ENCODE measurements at regions of chr17 and their contacts with region 1.

Region 1: DNA sequence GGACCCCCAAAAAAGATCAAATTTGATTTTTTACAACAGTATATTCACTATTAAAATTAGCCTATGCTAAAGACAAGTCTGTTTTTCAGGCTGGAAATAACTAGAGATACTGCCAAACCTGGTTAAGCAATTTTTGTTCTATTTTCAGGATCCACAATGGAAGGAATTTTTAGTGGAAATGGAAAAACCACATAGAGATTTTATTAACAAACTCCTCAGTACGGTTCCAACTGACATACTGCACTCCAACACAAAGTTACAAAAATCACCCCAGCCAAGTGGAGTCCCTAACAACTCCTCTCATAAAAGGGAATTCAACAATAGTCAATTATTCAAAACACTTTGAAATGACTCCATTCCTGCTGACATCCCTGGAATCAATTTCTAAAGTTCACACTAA is 101.6 kb upstream of the TOB1 start:
- DNase-seq: no peak

Region 2: GRCh38 chr17:50904521-50905459 is 63.0 kb before region 1 on chr17:
- intact Hi-C with region 1: loop called in 1 of 2 experiments (anchors 2 kb)
- DNase-seq: no peak

Region 3: GRCh38 chr17:50979524-50979927 is 11.7 kb after region 1 on chr17:
- intact Hi-C with region 1: loop called in 1 of 2 experiments (anchors 1 kb)
- DNase-seq: no peak